Naive thymus-derived CD4-positive, alpha-beta T cell (primary cell): ENCODE measurements at regions of chr3 and their contacts with region 1.

Region 1: GRCh38 chr3:155323063-155323666 is 29.7 kb upstream of the STRIT1 start:
- DNase-seq: peak in 2 of 9 donors; percentile 3 to 11
- ATAC-seq: peak; percentile 61
- H3K4me3 ChIP-seq: no peak overlapping the region
- H3K4me3 Mint-ChIP-seq: no peak overlapping the region
- H3K27ac ChIP-seq: no peak overlapping the region
- H3K27ac Mint-ChIP-seq: no peak overlapping the region
- H3K4me1 ChIP-seq: no peaks in the 10 kb centered on the region
- H3K4me1 Mint-ChIP-seq: no peaks in the 10 kb centered on the region
- H3K27me3 ChIP-seq: no peaks in the 10 kb centered on the region
- H3K27me3 Mint-ChIP-seq: peaks cover 0 to 6% (median 1%) of the 10 kb centered on the region in 5 donors

Region 2: GRCh38 chr3:154334973-154335420 is 988.2 kb before region 1 on chr3:
- CTCF ChIA-PET with region 1: no interaction called
- POLR2A ChIA-PET with region 1: no interaction called
- intact Hi-C with region 1: loop called in 1 of 2 experiments (anchors 10 kb)
- DNase-seq: peak in 5 of 9 donors; percentile 22 to 35 (median 26)
- ATAC-seq: peak; percentile 70
- H3K4me3 ChIP-seq: no peak overlapping the region
- H3K4me3 Mint-ChIP-seq: no peak overlapping the region
- H3K27ac ChIP-seq: no peak overlapping the region
- H3K27ac Mint-ChIP-seq: no peak overlapping the region
- H3K4me1 ChIP-seq: no peaks in the 10 kb centered on the region
- H3K4me1 Mint-ChIP-seq: no peaks in the 10 kb centered on the region
- H3K27me3 ChIP-seq: no peaks in the 10 kb centered on the region
- H3K27me3 Mint-ChIP-seq: peaks cover 6 to 41% (median 7%) of the 10 kb centered on the region in 5 donors

Region 3: GRCh38 chr3:154954753-154955152 is 368.4 kb before region 1 on chr3:
- CTCF ChIA-PET with region 1: no interaction called
- POLR2A ChIA-PET with region 1: no interaction called
- intact Hi-C with region 1: loop called in 1 of 2 experiments (anchors 10 kb)
- DNase-seq: peak in 1 of 9 donors; percentile 7
- ATAC-seq: peak; percentile 56
- H3K4me3 ChIP-seq: no peak overlapping the region
- H3K4me3 Mint-ChIP-seq: no peak overlapping the region
- H3K27ac ChIP-seq: no peak overlapping the region
- H3K27ac Mint-ChIP-seq: no peak overlapping the region
- H3K4me1 ChIP-seq: no peaks in the 10 kb centered on the region
- H3K4me1 Mint-ChIP-seq: no peaks in the 10 kb centered on the region
- H3K27me3 ChIP-seq: no peaks in the 10 kb centered on the region
- H3K27me3 Mint-ChIP-seq: no peaks in the 10 kb centered on the region